Motor neuron (in vitro differentiated cells): ENCODE measurements at regions of chr13 and their contacts with region 1.

Region 1: DNA sequence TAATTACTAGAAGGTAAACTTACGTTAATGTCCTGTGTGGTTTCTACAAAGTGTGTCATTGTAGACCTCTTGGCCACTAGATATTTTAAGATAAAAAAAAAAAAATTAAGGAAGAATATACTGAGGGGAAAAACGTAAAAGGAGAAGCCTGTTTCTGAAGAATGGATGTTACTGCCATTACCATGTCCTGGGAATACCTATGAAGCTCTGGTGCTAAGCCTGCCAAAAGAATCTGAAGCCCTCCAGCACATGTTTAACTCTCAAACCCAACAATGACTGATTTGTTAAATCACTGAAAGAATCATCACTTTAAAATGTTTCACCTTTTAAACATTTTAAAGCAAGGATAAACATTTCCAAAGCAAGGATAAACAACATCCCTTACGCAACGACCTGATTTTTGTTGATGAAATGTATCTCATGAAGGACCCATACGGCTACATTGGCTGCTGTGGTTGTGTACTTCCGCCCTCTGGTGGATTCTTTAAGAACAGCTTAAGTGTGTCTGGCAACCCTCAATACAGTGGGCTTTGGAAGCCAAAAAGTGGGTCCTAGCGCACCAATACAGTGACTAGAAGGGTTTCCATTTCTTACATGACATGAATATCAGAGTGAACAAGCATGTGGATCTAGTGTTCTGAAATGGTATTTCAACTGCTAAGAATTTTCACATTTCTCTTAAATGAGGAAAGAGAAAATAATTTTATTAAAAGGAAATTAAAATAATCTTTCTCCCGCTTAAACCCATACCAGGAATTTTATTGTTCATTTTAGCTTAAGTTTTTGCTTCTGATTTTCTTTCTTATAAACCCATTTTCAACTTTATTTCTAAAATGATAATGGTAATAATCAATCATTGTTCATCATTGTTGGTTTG is 74.5 kb upstream of the RAP2A start:
- ATAC-seq: peak; percentile 56 to 89 (median 72)
- H3K4me3 ChIP-seq: no peak overlapping the region
- H3K27ac ChIP-seq: no peak overlapping the region
- H3K4me1 ChIP-seq: no peaks in the 10 kb centered on the region

Region 2: DNA sequence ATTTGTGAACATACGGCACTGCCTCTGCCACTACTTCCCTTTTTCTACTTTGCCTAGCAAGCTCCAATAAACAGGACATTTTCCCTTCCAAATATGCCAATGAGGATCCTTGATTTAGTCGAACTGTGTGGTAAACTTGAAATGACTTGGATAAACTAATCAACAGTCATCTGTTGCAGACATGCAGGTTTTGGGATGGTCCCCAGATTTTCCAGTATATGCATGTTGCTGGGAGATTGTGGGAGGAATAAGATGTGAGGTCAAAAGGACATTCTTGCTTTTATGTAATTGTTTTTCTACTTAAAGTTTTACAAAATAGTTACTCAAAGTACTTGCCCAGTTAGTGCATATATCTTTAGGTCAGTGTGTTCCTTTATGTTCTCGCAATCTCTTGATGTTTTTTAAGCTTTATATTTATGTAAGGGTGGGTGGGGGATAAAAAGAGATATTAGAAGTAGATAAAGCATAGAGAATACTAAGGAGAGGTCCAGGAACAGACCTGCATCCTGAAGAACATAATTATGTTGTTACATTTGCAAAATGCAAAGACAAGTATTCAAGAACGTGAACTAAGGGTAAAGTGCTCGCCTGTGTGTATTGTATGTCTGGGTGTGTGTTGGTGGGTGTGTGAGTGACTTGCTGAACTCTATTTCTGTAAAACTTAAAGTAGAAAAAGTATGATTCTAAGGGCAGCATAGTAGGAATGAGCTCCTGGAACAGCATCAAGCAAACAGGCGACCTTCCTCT is 276.8 kb before region 1 on chr13:
- in situ Hi-C with region 1: no loop called
- ATAC-seq: peak in 3 of 8 experiments; percentile 89 to 92 (median 90)
- H3K4me3 ChIP-seq: no peak overlapping the region
- H3K27ac ChIP-seq: no peak overlapping the region
- H3K4me1 ChIP-seq: no peaks in the 10 kb centered on the region

Region 3: DNA sequence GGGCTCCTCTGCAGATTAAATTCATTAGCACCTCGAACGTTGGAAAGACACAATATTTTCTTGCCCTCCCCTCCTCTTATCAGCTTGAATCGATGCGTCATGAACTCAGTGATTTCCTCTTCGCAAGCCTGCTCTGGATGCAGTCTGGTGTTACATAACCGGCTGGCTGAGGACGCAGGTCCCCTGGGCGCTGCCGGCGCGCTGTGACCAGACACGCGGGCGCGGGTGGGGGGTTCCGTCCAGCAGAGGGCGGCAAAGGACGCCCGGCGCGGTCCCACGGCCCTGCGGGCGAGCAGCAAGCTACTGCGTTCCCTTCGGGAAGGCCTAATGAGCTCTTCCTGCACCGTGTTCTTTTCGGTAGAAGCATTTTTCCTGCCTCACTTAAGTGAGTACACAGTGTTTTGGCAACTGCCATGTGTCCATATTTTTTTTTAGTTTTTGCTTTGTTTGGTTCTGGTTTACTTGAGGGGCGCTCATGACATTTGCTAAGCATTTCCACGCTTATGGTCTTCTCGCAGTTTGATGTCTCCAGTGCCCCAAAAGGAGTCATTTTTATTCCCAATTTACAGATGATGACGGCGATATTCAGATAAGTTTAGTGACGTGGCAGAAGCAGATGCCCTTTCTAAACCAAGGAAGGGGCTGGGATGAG is 249.5 kb before region 1 on chr13:
- in situ Hi-C with region 1: loop called in 4 of 9 experiments (anchors 10 to 25 kb)
- ATAC-seq: peak; percentile 91 to 99 (median 95)
- H3K4me3 ChIP-seq: no peak overlapping the region
- H3K27ac ChIP-seq: no peak overlapping the region
- H3K4me1 ChIP-seq: peaks cover 22 to 47% of the 10 kb centered on the region in 2 donors

Region 4: DNA sequence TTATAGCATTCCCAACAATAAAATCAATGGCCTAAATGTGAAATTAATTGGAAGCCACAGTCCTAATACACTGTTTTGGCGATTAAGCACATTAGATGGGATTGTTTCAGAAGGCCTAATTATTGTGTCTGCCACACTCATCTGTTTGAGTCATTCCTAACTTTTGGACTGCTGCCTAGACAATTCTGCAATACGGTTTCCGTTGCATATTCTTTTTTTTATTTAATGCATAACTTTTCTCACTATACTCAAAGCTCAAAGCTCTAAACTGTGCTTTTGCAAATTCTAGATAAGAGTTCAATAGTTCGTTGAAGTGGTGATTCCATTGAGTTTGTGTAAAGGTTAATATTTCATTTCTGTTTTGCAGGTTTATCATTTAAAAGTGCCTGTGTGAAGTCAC is 84.2 kb before region 1 on chr13:
- in situ Hi-C with region 1: no loop called
- ATAC-seq: peak in 3 of 8 experiments; percentile 10 to 47 (median 39)
- H3K4me3 ChIP-seq: no peak overlapping the region
- H3K27ac ChIP-seq: no peak overlapping the region
- H3K4me1 ChIP-seq: peaks cover 0 to 5% of the 10 kb centered on the region in 2 donors